Naive thymus-derived CD4-positive, alpha-beta T cell (primary cell): ENCODE measurements at regions of chr20 and their contacts with region 1.

Region 1: DNA sequence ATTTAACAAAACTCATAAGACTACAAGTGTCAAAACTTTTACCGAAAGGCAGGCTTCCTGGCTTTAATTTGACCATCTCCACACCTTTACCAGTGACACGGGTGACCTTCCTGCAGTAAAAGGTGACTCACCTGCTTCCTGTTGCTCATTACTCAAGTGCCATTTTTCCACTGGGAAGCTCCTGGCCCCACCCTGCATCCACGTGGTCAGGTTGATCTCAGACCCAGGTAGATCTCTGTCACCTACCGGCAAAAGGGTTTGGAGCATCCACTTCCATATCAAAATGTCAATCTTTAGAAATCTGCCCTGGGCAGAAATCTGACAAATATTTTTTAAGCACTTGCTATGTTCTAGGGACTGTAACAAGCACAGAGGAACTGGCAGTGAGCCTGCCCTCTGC is 31.9 kb upstream of the CDH4 start:
- DNase-seq: no peak
- ATAC-seq: no peak
- H3K4me3 ChIP-seq: no peak overlapping the region
- H3K4me3 Mint-ChIP-seq: no peak overlapping the region
- H3K27ac ChIP-seq: no peak overlapping the region
- H3K27ac Mint-ChIP-seq: no peak overlapping the region
- H3K4me1 ChIP-seq: no peaks in the 10 kb centered on the region
- H3K4me1 Mint-ChIP-seq: no peaks in the 10 kb centered on the region
- H3K27me3 ChIP-seq: no peaks in the 10 kb centered on the region
- H3K27me3 Mint-ChIP-seq: peaks cover 0 to 41% (median 17%) of the 10 kb centered on the region in 5 donors

Region 2: DNA sequence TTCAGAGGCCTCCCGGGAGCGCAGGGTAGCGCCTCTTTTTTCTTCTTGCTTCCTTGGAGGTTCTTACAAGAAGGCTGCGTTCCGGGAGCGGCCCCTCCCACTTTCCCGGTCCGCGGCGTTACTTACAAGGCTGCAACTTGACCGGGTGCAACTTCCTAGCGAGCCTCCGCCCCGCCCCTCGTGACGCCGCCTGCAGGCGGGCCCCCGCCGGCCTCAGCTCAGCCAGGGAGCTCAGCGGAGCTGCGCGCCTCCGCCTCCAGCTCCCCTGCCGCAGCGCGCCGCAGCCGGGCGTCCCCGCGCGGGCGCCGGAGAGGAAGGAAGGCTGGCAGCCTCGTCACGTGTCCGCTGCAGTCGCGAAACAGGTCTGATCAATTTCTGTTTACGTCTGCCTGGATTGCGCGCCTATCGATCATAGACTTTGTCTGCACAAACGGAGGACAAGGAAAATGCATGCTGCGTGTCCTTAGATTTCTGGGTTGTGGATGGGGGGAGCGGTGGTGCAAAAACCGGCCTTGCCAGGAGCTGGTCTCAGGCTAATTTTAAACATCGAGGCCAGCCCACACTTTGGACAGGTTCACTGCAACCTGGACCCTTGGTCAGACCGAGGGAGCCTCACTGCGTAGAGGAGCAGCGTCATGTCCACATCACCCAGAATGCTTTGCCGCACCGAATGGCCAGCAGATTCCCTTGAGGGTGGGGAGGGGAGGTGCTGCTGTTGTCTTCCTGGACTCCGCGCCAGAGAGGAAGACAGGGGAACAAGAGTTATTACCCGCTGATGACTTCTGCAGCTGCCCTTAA is 1279.8 kb before region 1 on chr20 and contains the starts of genes FAM217B and PPP1R3D:
- CTCF ChIA-PET with region 1: no interaction called
- POLR2A ChIA-PET with region 1: no interaction called
- intact Hi-C with region 1: loop called in 1 of 2 experiments (anchors 10 kb)
- DNase-seq: peak; percentile 82 to 95 (median 86)
- ATAC-seq: peak; percentile 98
- H3K4me3 ChIP-seq: peak within 1 kb of the TSS; percentile 99
- H3K4me3 Mint-ChIP-seq: peak within 1 kb of the TSS; percentile 96 to 99 (median 98)
- H3K27ac ChIP-seq: peak within 1 kb of the TSS; percentile 79
- H3K27ac Mint-ChIP-seq: peak within 1 kb of the TSS; percentile 95 to 99 (median 97)
- H3K4me1 ChIP-seq: peaks cover 17 to 23% of the 10 kb centered on the region in 2 donors
- H3K4me1 Mint-ChIP-seq: peaks cover 29 to 65% (median 49%) of the 10 kb centered on the region in 7 donors
- H3K27me3 ChIP-seq: no peaks in the 10 kb centered on the region
- H3K27me3 Mint-ChIP-seq: no peaks in the 10 kb centered on the region
- total RNA-seq, gene FAM217B: 19.3 to 47.4 (median 32.6) TPM
- total RNA-seq, gene PPP1R3D: 4.1 to 11.8 (median 7.5) TPM